Sigmoid colon (tissue), 7 donors: ENCODE measurements at regions of chr7 and their contacts with region 1.

Region 1: DNA sequence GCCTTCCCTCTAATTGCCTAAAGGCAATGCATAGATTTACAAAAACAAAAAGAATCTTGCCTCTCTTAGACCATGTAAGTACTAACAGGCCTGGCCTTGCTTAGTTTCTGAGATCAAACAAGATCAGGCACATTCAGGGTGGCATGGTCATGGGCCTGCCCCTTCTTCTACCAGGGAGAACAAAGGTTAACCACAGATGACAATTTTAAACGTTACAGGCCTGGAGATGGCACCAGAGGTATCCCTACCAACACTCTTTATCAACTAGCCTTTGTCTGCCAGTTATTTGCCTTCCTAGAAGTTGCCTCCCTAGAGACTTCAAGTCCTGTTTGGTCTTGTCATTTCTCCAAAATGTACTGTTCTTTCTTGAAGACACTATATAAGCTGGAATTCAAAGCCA is 252.6 kb downstream of the DOCK4 start:
- DNase-seq: no peak
- H3K4me3 ChIP-seq: no peak overlapping the region
- H3K27ac ChIP-seq: no peak overlapping the region
- H3K4me1 ChIP-seq: no peaks in the 10 kb centered on the region
- H3K27me3 ChIP-seq: no peaks in the 10 kb centered on the region
- CTCF ChIP-seq: no peak
- EP300 ChIP-seq: no peak
- POLR2A ChIP-seq: no peak

Region 2: DNA sequence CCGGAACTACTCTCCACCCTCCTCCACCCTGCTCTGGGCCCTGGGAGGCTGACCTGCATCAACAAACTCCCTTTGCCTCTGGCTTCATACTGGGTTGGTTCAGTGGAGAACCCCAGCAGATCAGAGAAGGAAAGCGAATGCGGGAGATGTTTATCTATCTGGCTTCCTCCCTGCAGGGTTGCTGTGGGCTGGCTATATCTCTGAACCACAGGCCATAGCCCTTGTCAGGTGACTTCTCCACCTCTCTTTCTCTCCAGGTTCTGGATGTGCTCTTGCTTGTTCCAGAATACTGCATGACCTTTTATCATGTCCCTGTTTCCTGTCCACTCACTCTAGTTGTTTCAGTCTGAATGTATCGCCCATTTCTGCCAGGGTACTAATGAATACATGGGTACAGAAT is 444.9 kb after region 1 on chr7:
- intact Hi-C with region 1: loop called (anchors 10 kb)
- DNase-seq: no peak
- H3K4me3 ChIP-seq: no peak overlapping the region
- H3K27ac ChIP-seq: no peak overlapping the region
- H3K4me1 ChIP-seq: peaks cover 0 to 4% (median 0%) of the 10 kb centered on the region in 4 donors
- H3K27me3 ChIP-seq: no peaks in the 10 kb centered on the region
- CTCF ChIP-seq: no peak
- EP300 ChIP-seq: no peak
- POLR2A ChIP-seq: no peak

Region 3: GRCh38 chr7:112550468-112551060 is 597.0 kb after region 1 on chr7:
- intact Hi-C with region 1: no loop called
- DNase-seq: no peak
- H3K4me3 ChIP-seq: no peak overlapping the region
- H3K27ac ChIP-seq: no peak overlapping the region
- H3K4me1 ChIP-seq: no peaks in the 10 kb centered on the region
- H3K27me3 ChIP-seq: no peaks in the 10 kb centered on the region
- CTCF ChIP-seq: peak; percentile 50 to 87 (median 78)
- EP300 ChIP-seq: no peak
- POLR2A ChIP-seq: no peak